Caco-2 (cell line): ENCODE measurements at regions of chr10 and their contacts with region 1.

Region 1: DNA sequence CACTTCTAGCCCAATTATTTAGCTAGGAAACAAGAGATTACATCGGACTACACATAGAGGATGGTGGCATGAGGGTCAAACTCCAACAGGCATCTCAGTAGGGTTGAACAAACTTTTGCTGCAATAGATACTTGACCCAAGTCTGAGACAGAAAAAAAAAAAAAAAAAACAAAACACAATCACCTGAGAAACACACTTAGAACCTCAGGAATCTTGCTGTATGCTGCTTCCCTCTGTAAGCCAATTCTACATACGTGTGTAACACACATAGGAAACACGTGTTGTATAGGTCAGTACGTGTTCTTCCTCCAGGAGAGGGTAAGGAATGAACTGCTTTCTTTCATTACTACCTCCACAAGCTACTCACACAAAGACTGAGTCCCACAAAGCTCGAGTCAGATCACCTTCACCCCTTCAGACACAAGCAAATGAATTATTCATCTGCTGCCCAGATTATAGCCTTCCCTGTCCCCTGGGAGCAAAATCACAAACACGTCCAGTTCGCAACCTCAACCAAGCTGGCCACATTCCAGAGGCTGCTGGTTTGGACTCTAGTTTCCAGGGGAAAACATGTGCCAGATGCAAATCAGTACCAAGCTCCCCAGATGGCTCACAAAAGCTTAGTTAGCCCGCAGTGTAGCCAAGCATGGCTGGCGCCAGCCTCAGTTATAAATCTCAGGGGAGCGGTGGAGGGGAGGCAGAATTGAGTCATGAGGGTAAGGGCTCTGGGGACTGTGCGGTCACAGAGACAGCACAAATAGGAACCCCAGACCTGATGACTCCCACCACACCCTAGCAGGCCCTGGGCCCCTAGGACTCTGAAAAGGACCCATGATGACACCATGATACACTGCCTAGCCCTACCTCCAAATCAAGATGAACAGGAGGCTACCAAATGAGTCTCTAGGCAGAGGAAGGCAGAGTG is 15.1 kb downstream of the PSAP start:
- DNase-seq: no peak
- H3K4me3 ChIP-seq: no peak overlapping the region
- H3K4me3 Mint-ChIP-seq: no peak overlapping the region
- H3K27ac Mint-ChIP-seq: peak overlapping the region; percentile 46
- H3K4me1 ChIP-seq: peaks cover 56% of the 10 kb centered on the region
- H3K4me1 Mint-ChIP-seq: peaks cover 48% of the 10 kb centered on the region
- H3K27me3 ChIP-seq: no peaks in the 10 kb centered on the region
- H3K27me3 Mint-ChIP-seq: no peaks in the 10 kb centered on the region
- CTCF ChIP-seq: no peak

Region 2: GRCh38 chr10:71888623-71889387 is 52.9 kb after region 1 on chr10:
- CTCF ChIA-PET with region 1: no interaction called
- POLR2A ChIA-PET with region 1: no interaction called
- intact Hi-C with region 1: loop called (anchors 2 kb)
- DNase-seq: peak; percentile 73 to 79
- H3K4me3 ChIP-seq: peak overlapping the region; percentile 66
- H3K4me3 Mint-ChIP-seq: peak overlapping the region; percentile 84
- H3K27ac Mint-ChIP-seq: peak overlapping the region; percentile 47
- H3K4me1 ChIP-seq: peaks cover 25% of the 10 kb centered on the region
- H3K4me1 Mint-ChIP-seq: peaks cover 20% of the 10 kb centered on the region
- H3K27me3 ChIP-seq: no peaks in the 10 kb centered on the region
- H3K27me3 Mint-ChIP-seq: no peaks in the 10 kb centered on the region
- CTCF ChIP-seq: no peak